Thyroid gland (tissue), 4 donors: ENCODE measurements at regions of chr10 and their contacts with region 1.

Region 1: GRCh38 chr10:75235375-75236177 is at the start of gene COMTD1:
- DNase-seq: peak; percentile 97 to 98
- H3K4me3 ChIP-seq: peak within 1 kb of the TSS; percentile 62 to 86 (median 73)
- H3K27ac ChIP-seq: peak within 1 kb of the TSS; percentile 68 to 74 (median 72)
- H3K4me1 ChIP-seq: peaks cover 7 to 10% of the 10 kb centered on the region in 2 donors
- H3K27me3 ChIP-seq: no peaks in the 10 kb centered on the region
- CTCF ChIP-seq: peak; percentile 100
- POLR2A ChIP-seq: peak in 1 of 2 donors; percentile 43
- total RNA-seq, gene COMTD1: 43.4 to 74.0 (median 68.7) TPM

Region 2: DNA sequence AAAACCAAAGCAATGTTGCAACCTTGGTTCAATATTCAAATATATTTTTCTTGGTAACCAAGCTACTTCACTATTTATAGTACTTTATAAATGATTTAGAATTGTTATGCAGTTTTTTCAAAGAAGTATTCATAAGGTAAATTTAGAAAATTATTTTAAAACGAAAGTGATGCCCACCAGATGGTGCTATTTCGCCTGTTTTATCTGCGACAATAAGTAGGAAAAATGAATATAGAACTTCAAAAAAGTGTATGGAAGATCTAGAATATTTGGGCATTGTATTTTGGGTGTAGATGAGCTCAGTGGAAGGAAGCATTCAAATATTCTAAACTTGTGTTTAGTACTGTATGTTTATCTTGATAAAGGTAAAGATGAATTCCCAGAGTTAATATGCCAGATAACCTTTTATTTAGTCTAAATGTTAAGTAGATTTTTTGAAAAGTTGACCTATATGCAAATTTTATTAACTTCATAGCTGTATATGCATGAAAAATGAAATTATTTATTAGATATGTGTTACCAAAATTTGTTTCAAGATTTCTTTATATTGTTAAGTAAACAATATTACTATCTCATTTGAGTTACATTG is 991.4 kb before region 1 on chr10:
- intact Hi-C with region 1: loop called (anchors 10 kb)
- DNase-seq: peak in 1 of 2 donors; percentile 21
- H3K4me3 ChIP-seq: no peak overlapping the region
- H3K27ac ChIP-seq: no peak overlapping the region
- H3K4me1 ChIP-seq: no peaks in the 10 kb centered on the region
- H3K27me3 ChIP-seq: no peaks in the 10 kb centered on the region
- CTCF ChIP-seq: peak in 5 of 6 experiments; percentile 11 to 61 (median 59)
- POLR2A ChIP-seq: no peak

Region 3: GRCh38 chr10:74826142-74827044 is 409.2 kb before region 1 on chr10 and contains the start of gene KAT6B:
- intact Hi-C with region 1: loop called (anchors 10 kb)
- DNase-seq: peak; percentile 100
- H3K4me3 ChIP-seq: peak within 1 kb of the TSS; percentile 79 to 93 (median 89)
- H3K27ac ChIP-seq: peak within 1 kb of the TSS; percentile 99 to 100 (median 100)
- H3K4me1 ChIP-seq: peaks cover 28 to 35% of the 10 kb centered on the region in 2 donors
- H3K27me3 ChIP-seq: no peaks in the 10 kb centered on the region
- CTCF ChIP-seq: peak in 3 of 6 experiments; percentile 20 to 29 (median 23)
- POLR2A ChIP-seq: peak; percentile 12 to 82
- total RNA-seq, gene KAT6B: 56.5 to 115 (median 76.3) TPM

Region 4: DNA sequence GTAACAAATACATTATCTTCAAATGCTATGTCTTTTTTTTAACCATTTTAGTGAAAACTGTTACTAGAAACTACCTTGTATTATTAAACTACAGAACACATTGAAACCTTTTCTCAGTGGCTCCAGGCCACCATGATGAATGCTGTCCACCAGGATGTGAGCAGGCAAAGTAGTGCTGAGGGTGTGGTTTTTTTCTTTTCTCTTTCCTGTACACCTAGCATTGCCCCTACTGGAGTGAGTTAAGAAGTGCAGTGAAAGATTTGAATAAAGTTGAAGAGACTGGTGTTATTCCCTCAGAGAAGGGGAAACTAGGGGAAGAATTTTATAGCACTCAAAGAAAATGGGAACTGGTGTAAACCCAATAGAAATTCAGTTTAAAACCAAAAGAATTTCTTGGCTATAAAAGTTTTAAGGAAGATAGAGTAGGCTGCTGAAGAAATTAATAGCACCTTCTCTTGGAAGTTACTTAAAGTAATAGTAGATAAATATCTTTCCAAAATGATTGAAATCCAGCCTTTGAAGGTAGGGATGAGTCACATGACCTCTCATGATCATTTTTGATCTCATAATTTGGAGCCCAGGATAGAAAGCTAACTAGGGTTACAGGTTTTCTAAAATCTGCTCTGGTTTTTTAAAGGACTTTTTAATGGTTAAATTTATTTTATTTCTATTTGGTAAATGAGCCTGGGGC is 244.0 kb before region 1 on chr10:
- intact Hi-C with region 1: no loop called
- DNase-seq: no peak
- H3K4me3 ChIP-seq: no peak overlapping the region
- H3K27ac ChIP-seq: no peak overlapping the region
- H3K4me1 ChIP-seq: no peaks in the 10 kb centered on the region
- H3K27me3 ChIP-seq: no peaks in the 10 kb centered on the region
- CTCF ChIP-seq: peak in 4 of 6 experiments; percentile 8 to 44 (median 20)
- POLR2A ChIP-seq: no peak

Region 5: GRCh38 chr10:75111367-75111906 is 124.1 kb before region 1 on chr10 and contains the start of gene SAMD8:
- intact Hi-C with region 1: loop called (anchors 5 kb)
- DNase-seq: peak; percentile 96 to 97
- H3K4me3 ChIP-seq: peak within 1 kb of the TSS; percentile 92 to 98 (median 98)
- H3K27ac ChIP-seq: peak within 1 kb of the TSS; percentile 95 to 99 (median 98)
- H3K4me1 ChIP-seq: peaks cover 4 to 10% of the 10 kb centered on the region in 2 donors
- H3K27me3 ChIP-seq: no peaks in the 10 kb centered on the region
- CTCF ChIP-seq: peak in 3 of 6 experiments; percentile 20 to 50 (median 31)
- POLR2A ChIP-seq: peak; percentile 58 to 90
- total RNA-seq, gene SAMD8: 19.9 to 36.8 (median 28.4) TPM

Region 6: GRCh38 chr10:75187961-75188426 is 47.6 kb before region 1 on chr10:
- intact Hi-C with region 1: loop called (anchors 5 kb)
- DNase-seq: peak; percentile 57 to 68
- H3K4me3 ChIP-seq: no peak overlapping the region
- H3K27ac ChIP-seq: peak overlapping the region in 1 of 3 donors; percentile 1
- H3K4me1 ChIP-seq: peaks cover 13 to 29% of the 10 kb centered on the region in 2 donors
- H3K27me3 ChIP-seq: no peaks in the 10 kb centered on the region
- CTCF ChIP-seq: peak in 5 of 6 experiments; percentile 45 to 83 (median 73)
- POLR2A ChIP-seq: no peak

Region 7: GRCh38 chr10:75350791-75351190 is 115.2 kb after region 1 on chr10:
- intact Hi-C with region 1: no loop called
- DNase-seq: no peak
- H3K4me3 ChIP-seq: no peak overlapping the region
- H3K27ac ChIP-seq: no peak overlapping the region
- H3K4me1 ChIP-seq: no peaks in the 10 kb centered on the region
- H3K27me3 ChIP-seq: no peaks in the 10 kb centered on the region
- CTCF ChIP-seq: no peak
- POLR2A ChIP-seq: no peak